Caco-2 (cell line): ENCODE measurements at regions of chr2 and their contacts with region 1.

Region 1: DNA sequence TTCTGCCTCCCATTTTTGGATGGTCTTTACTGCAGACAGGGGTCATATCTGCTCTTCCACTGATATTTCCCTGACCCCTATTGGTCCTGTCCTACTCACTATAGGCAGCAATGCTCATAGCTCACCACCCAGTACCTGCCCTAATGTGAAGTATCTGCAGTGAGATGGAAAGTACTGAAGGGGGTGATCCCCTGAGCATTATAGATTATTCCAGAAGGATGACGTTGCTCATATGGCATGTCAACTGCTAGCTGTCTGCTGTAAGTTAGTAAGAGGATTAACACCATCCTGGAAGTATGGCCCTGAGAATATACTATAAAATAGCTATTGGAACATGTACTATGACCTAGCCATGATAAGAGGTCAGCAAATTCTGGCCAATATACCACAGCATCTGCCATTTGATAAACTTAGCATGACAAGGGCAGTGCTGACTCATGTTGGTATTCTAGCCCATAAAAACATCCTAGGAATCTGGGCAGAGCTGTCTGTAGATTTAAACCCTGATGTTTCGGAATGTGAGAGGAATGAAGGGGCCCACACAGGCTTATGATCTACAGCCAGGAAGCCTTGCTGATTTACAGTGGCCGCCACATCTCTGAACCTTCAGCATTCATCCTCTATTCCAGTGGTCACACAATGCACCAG is 451.4 kb downstream of the TNS1 start:
- DNase-seq: peak; percentile 60 to 73
- H3K4me3 ChIP-seq: no peak overlapping the region
- H3K4me3 Mint-ChIP-seq: peak overlapping the region; percentile 21
- H3K27ac Mint-ChIP-seq: peak overlapping the region; percentile 82
- H3K4me1 ChIP-seq: peaks cover 34% of the 10 kb centered on the region
- H3K4me1 Mint-ChIP-seq: peaks cover 41% of the 10 kb centered on the region
- H3K27me3 ChIP-seq: no peaks in the 10 kb centered on the region
- H3K27me3 Mint-ChIP-seq: no peaks in the 10 kb centered on the region
- CTCF ChIP-seq: no peak

Region 2: DNA sequence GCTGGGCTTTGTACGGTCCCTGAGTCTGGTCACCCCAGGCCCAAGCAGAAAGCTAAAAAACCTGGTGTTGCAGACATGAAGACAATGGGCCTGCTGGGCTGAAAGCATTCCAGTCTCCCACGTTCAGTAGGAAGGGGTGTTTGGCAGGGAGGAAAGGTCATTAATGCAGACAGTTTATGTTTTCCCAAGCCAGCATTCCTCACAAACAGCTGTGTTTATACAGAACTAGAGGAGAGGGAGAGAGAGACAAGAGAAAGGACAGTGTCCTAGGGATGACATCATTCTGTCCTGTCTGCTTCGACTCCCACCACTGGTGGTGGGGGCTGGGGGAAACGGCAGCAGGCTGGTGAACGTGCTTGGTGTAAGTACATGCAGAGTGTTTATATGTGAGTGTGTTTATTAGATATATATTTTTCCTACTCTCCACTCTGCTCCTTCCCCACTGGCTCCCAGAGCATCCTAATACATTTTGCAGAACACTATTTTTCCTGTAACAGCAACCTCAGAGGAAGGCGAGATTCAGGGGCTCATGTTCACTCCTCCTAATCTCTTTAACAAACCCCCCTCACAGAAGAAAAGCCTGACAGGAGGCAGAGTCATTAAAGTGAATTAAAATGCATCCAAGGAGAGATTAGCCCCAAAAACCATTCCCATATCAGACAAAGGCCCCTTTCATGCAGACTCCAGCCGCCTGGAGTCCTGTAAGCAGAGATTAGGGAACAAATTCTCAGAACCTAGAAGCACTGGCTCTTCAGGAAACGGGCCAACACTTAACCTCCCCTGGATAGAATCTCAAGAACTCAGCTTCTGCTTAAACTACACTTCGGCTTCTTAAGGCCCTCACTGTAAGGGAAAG is 71.1 kb after region 1 on chr2:
- CTCF ChIA-PET with region 1: no interaction called
- POLR2A ChIA-PET with region 1: no interaction called
- intact Hi-C with region 1: loop called (anchors 2 kb)
- DNase-seq: peak; percentile 66 to 67
- H3K4me3 ChIP-seq: no peak overlapping the region
- H3K4me3 Mint-ChIP-seq: no peak overlapping the region
- H3K27ac Mint-ChIP-seq: peak overlapping the region; percentile 87
- H3K4me1 ChIP-seq: peaks cover 18% of the 10 kb centered on the region
- H3K4me1 Mint-ChIP-seq: peaks cover 16% of the 10 kb centered on the region
- H3K27me3 ChIP-seq: no peaks in the 10 kb centered on the region
- H3K27me3 Mint-ChIP-seq: no peaks in the 10 kb centered on the region
- CTCF ChIP-seq: no peak

Region 3: GRCh38 chr2:217650716-217651360 is 99.5 kb after region 1 on chr2:
- CTCF ChIA-PET with region 1: interaction called, 5 read pairs
- POLR2A ChIA-PET with region 1: no interaction called
- intact Hi-C with region 1: loop called (anchors 2 kb)
- DNase-seq: peak; percentile 77 to 85
- H3K4me3 ChIP-seq: no peak overlapping the region
- H3K4me3 Mint-ChIP-seq: no peak overlapping the region
- H3K27ac Mint-ChIP-seq: no peak overlapping the region
- H3K4me1 ChIP-seq: peaks cover 7% of the 10 kb centered on the region
- H3K4me1 Mint-ChIP-seq: peaks cover 10% of the 10 kb centered on the region
- H3K27me3 ChIP-seq: no peaks in the 10 kb centered on the region
- H3K27me3 Mint-ChIP-seq: no peaks in the 10 kb centered on the region
- CTCF ChIP-seq: peak; percentile 67 to 85

Region 4: GRCh38 chr2:217685255-217685605 is 133.9 kb after region 1 on chr2:
- CTCF ChIA-PET with region 1: no interaction called
- POLR2A ChIA-PET with region 1: no interaction called
- intact Hi-C with region 1: loop called (anchors 1 kb)
- DNase-seq: peak; percentile 91 to 93
- H3K4me3 ChIP-seq: no peak overlapping the region
- H3K4me3 Mint-ChIP-seq: peak overlapping the region; percentile 58
- H3K27ac Mint-ChIP-seq: peak overlapping the region; percentile 89
- H3K4me1 ChIP-seq: peaks cover 24% of the 10 kb centered on the region
- H3K4me1 Mint-ChIP-seq: peaks cover 22% of the 10 kb centered on the region
- H3K27me3 ChIP-seq: no peaks in the 10 kb centered on the region
- H3K27me3 Mint-ChIP-seq: no peaks in the 10 kb centered on the region
- CTCF ChIP-seq: no peak